Caco-2 (cell line): ENCODE measurements at regions of chr2 and their contacts with region 1.

Region 1: GRCh38 chr2:231052494-231053451 is 3.9 kb upstream of the PSMD1 start:
- DNase-seq: peak; percentile 82 to 86
- H3K4me3 ChIP-seq: peak overlapping the region; percentile 50
- H3K4me3 Mint-ChIP-seq: peak overlapping the region; percentile 85
- H3K27ac Mint-ChIP-seq: peak overlapping the region; percentile 73
- H3K4me1 ChIP-seq: peaks cover 41% of the 10 kb centered on the region
- H3K4me1 Mint-ChIP-seq: no peaks in the 10 kb centered on the region
- H3K27me3 ChIP-seq: no peaks in the 10 kb centered on the region
- H3K27me3 Mint-ChIP-seq: no peaks in the 10 kb centered on the region
- CTCF ChIP-seq: peak; percentile 66 to 77

Region 2: DNA sequence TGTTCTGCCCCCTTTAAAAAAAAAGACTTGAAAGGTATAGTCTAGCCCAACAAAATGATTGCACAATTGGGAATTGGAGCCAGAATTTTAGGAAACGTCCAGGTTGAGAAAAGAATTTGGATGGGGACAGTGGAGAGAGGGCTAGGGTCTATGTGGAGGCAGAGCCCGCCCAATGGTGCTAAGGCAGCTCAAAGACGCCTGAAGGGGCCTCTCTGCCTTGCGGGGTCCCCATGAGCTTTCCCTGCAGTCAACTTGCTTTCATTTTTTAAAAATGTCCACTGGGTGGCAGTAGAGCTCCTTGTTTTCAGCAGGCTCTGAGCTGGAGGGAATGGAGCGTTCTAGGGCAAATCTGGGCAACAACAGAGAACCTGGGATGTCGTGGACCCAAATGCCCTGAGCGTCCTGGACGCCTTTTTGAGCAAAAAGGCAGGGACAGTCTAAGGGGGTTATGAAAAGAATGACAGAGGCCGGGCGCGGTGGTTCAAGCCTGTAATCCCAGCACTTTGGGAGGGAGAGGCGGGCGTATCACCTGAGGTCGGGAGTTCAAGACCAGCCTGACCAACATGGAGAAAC is 228.3 kb before region 1 on chr2:
- CTCF ChIA-PET with region 1: interaction called, 8 read pairs
- POLR2A ChIA-PET with region 1: interaction called, 3 read pairs
- intact Hi-C with region 1: loop called (anchors 1 kb)
- DNase-seq: peak; percentile 72 to 77
- H3K4me3 ChIP-seq: no peak overlapping the region
- H3K4me3 Mint-ChIP-seq: no peak overlapping the region
- H3K27ac Mint-ChIP-seq: no peak overlapping the region
- H3K4me1 ChIP-seq: no peaks in the 10 kb centered on the region
- H3K4me1 Mint-ChIP-seq: no peaks in the 10 kb centered on the region
- H3K27me3 ChIP-seq: no peaks in the 10 kb centered on the region
- H3K27me3 Mint-ChIP-seq: no peaks in the 10 kb centered on the region
- CTCF ChIP-seq: peak; percentile 51 to 60

Region 3: DNA sequence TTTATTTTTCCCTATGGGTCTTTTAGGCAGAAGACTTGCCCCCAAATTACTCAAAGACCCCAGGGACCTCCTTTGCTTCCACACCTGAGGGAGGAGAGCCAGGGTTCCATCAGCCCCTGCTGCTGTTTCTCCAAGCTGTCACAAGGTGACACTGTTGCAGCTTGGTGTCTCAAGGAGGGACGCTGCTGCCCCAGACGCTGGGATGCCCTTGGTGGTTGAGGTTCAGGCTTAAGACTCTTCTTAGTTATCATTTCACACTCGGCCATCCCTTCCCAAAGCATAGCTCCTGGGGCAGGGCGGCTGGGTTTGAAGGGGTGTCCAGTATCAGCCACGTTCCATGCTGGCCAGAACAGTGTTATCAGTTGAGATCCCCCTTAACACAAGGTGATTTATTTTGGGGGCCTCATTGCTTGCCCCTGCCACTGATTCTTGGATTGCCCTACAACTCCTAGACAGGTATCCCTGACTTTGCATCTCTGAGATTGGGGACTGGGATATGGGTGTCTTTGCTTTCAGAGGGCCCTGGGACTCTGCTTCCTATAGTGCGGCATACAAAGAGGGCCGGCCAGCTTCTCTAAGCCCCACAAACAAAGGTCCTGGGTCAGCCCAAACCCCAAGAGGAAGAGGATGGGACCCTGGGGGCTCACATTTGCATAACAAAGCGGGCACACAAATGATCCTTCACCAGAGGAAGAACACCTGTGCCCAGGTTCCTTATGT is 150.4 kb before region 1 on chr2:
- CTCF ChIA-PET with region 1: interaction called, 6 read pairs
- POLR2A ChIA-PET with region 1: no interaction called
- intact Hi-C with region 1: loop called (anchors 2 kb)
- DNase-seq: peak; percentile 61 to 62
- H3K4me3 ChIP-seq: no peak overlapping the region
- H3K4me3 Mint-ChIP-seq: no peak overlapping the region
- H3K27ac Mint-ChIP-seq: no peak overlapping the region
- H3K4me1 ChIP-seq: no peaks in the 10 kb centered on the region
- H3K4me1 Mint-ChIP-seq: peaks cover 8% of the 10 kb centered on the region
- H3K27me3 ChIP-seq: no peaks in the 10 kb centered on the region
- H3K27me3 Mint-ChIP-seq: no peaks in the 10 kb centered on the region
- CTCF ChIP-seq: peak; percentile 73 to 86

Region 4: GRCh38 chr2:230999477-230999876 is 53.3 kb before region 1 on chr2:
- CTCF ChIA-PET with region 1: interaction called, 4 read pairs
- POLR2A ChIA-PET with region 1: no interaction called
- intact Hi-C with region 1: loop called (anchors 2 kb)
- DNase-seq: no peak
- H3K4me3 ChIP-seq: no peak overlapping the region
- H3K4me3 Mint-ChIP-seq: no peak overlapping the region
- H3K27ac Mint-ChIP-seq: no peak overlapping the region
- H3K4me1 ChIP-seq: no peaks in the 10 kb centered on the region
- H3K4me1 Mint-ChIP-seq: peaks cover 13% of the 10 kb centered on the region
- H3K27me3 ChIP-seq: no peaks in the 10 kb centered on the region
- H3K27me3 Mint-ChIP-seq: no peaks in the 10 kb centered on the region
- CTCF ChIP-seq: no peak

Region 5: DNA sequence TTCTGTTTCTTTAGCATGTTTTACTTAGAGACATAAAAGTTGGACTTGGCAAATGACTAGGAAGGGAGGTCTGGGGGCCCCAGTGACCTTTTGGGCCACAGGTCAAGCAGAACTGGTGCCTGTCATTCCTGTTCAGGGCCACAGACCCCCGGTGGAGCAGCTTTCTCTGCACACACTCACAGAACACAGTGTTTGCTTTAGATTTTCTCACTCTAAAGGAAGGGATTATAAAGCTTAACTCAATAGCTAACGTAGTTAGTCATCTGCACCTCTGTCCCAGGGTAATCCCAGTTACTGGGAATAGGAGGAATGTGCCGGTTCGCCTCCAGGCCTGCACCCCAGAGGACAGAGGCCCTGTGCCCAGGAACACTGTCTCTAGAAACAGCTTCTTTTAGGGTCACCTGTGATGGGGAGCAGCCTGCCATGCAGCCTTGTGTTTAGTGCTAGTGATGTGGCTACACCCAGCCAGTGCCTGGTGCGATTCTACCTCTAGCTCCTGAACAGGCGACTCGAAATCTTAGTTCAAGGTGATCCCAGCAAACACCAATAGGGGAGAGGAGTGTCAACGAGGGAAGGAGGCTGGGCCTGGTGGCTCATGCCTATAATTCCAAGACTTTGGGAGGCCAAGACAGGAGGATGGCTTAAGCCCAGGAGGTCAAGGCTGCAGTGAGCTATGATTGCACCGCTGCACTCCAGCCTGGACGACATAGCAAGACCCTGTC is 45.3 kb before region 1 on chr2:
- CTCF ChIA-PET with region 1: interaction called, 15 read pairs
- POLR2A ChIA-PET with region 1: interaction called, 15 read pairs
- intact Hi-C with region 1: loop called (anchors 1 kb)
- DNase-seq: peak; percentile 91 to 93
- H3K4me3 ChIP-seq: no peak overlapping the region
- H3K4me3 Mint-ChIP-seq: peak overlapping the region; percentile 58
- H3K27ac Mint-ChIP-seq: peak overlapping the region; percentile 97
- H3K4me1 ChIP-seq: peaks cover 52% of the 10 kb centered on the region
- H3K4me1 Mint-ChIP-seq: peaks cover 38% of the 10 kb centered on the region
- H3K27me3 ChIP-seq: no peaks in the 10 kb centered on the region
- H3K27me3 Mint-ChIP-seq: no peaks in the 10 kb centered on the region
- CTCF ChIP-seq: no peak

Region 6: GRCh38 chr2:231034291-231034882 is 18.4 kb before region 1 on chr2:
- CTCF ChIA-PET with region 1: interaction called, 6 read pairs
- POLR2A ChIA-PET with region 1: interaction called, 3 read pairs
- intact Hi-C with region 1: loop called (anchors 1 kb)
- DNase-seq: peak; percentile 66 to 70
- H3K4me3 ChIP-seq: no peak overlapping the region
- H3K4me3 Mint-ChIP-seq: no peak overlapping the region
- H3K27ac Mint-ChIP-seq: peak overlapping the region; percentile 97
- H3K4me1 ChIP-seq: peaks cover 63% of the 10 kb centered on the region
- H3K4me1 Mint-ChIP-seq: peaks cover 17% of the 10 kb centered on the region
- H3K27me3 ChIP-seq: no peaks in the 10 kb centered on the region
- H3K27me3 Mint-ChIP-seq: no peaks in the 10 kb centered on the region
- CTCF ChIP-seq: no peak

Region 7: DNA sequence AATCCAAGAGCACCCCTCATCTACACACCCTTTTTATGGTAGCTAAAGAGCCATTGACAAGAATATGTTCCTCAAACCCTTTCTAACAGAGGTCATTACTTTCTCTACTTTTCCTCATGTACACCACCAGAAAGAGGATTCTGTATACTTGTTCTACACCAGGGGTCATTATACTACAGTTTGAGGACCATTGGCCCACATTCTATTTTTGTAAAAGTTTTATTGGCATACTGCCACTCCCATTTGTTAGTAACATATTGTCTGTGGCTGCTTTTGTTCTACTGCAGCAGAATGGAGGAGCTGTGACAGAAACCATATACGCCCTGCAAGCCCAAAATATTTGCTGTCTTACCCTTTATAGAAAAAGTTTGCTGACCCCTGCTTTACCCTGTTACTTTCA is 57.8 kb after region 1 on chr2:
- CTCF ChIA-PET with region 1: no interaction called
- POLR2A ChIA-PET with region 1: no interaction called
- intact Hi-C with region 1: no loop called
- DNase-seq: no peak
- H3K4me3 ChIP-seq: no peak overlapping the region
- H3K4me3 Mint-ChIP-seq: no peak overlapping the region
- H3K27ac Mint-ChIP-seq: no peak overlapping the region
- H3K4me1 ChIP-seq: no peaks in the 10 kb centered on the region
- H3K4me1 Mint-ChIP-seq: no peaks in the 10 kb centered on the region
- H3K27me3 ChIP-seq: no peaks in the 10 kb centered on the region
- H3K27me3 Mint-ChIP-seq: no peaks in the 10 kb centered on the region
- CTCF ChIP-seq: no peak